ENCODE measurements at regions of chr1 and their contacts with region 1.

Region 1: DNA sequence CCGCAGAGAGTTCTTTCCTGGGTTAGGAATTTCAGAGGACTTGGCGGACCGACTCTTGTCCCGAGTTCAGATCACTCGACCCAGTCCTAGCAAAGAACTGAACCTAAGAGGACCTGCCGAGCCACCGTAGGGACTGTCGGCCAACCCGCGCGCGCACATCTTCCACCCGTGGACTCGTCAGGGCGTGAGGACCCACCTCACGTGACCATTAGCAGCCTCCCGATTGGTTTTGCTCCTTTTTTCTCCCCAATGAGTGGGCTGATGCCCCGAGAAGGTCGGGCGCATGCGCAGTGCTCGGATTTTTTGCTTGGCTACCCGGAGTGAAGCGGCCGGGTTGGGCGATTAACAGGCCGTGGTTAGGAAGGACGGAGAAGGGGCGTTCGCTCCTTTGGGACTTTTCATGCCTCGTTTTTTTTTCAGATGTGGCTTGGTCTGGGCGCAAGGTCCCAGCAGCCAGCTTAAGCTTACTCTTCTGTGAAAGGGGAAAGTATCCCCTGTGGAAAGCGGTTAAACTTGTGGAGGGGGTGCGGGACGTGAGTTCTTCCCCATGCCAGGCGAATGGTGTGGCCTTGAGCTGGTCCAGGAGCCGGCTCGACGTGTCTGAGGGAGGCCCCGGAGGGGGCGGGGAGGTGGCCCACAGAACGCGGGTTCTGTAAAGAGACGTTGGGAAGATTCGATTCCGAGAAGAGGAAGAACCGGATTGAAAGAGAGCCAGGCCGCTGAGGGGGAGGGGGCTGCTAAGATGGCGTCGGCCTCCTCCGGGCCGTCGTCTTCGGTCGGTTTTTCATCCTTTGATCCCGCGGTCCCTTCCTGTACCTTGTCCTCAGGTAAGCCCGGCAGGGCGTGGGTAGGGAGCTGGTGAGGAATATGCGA is at the start of gene PIP5K1A:
- DNase-seq: peak; percentile 99
- H3K4me3 Mint-ChIP-seq: peak within 1 kb of the TSS; percentile 99
- H3K27ac Mint-ChIP-seq: peak within 1 kb of the TSS; percentile 96
- H3K4me1 Mint-ChIP-seq: peaks cover 37% of the 10 kb centered on the region
- H3K27me3 Mint-ChIP-seq: no peaks in the 10 kb centered on the region
- total RNA-seq, gene PIP5K1A: 78.6 to 84.3 TPM

Region 2: GRCh38 chr1:151059078-151059907 is 139.2 kb before region 1 on chr1 and contains the start of gene CDC42SE1:
- CTCF ChIA-PET with region 1: no interaction called
- POLR2A ChIA-PET with region 1: no interaction called
- intact Hi-C with region 1: loop called (anchors 2 kb)
- DNase-seq: peak; percentile 89
- H3K4me3 Mint-ChIP-seq: peak within 1 kb of the TSS; percentile 98
- H3K27ac Mint-ChIP-seq: peak within 1 kb of the TSS; percentile 99
- H3K4me1 Mint-ChIP-seq: peaks cover 56% of the 10 kb centered on the region
- H3K27me3 Mint-ChIP-seq: no peaks in the 10 kb centered on the region
- total RNA-seq, gene CDC42SE1: 135 to 136 TPM

Region 3: GRCh38 chr1:151254217-151255213 is 56.0 kb after region 1 on chr1 and contains the start of gene PSMD4:
- CTCF ChIA-PET with region 1: interaction called, 32 read pairs
- POLR2A ChIA-PET with region 1: interaction called, 8 read pairs
- intact Hi-C with region 1: loop called (anchors 1 kb)
- DNase-seq: peak; percentile 97
- H3K4me3 Mint-ChIP-seq: peak within 1 kb of the TSS; percentile 92
- H3K27ac Mint-ChIP-seq: peak within 1 kb of the TSS; percentile 81
- H3K4me1 Mint-ChIP-seq: peaks cover 25% of the 10 kb centered on the region
- H3K27me3 Mint-ChIP-seq: peaks cover 2% of the 10 kb centered on the region
- total RNA-seq, gene PSMD4: 212 to 227 TPM

Region 4: GRCh38 chr1:151346769-151347522 is 148.5 kb after region 1 on chr1 and contains the start of gene RFX5:
- CTCF ChIA-PET with region 1: no interaction called
- POLR2A ChIA-PET with region 1: no interaction called
- intact Hi-C with region 1: loop called (anchors 5 kb)
- DNase-seq: peak; percentile 97
- H3K4me3 Mint-ChIP-seq: peak within 1 kb of the TSS; percentile 89
- H3K27ac Mint-ChIP-seq: peak within 1 kb of the TSS; percentile 92
- H3K4me1 Mint-ChIP-seq: peaks cover 32% of the 10 kb centered on the region
- H3K27me3 Mint-ChIP-seq: no peaks in the 10 kb centered on the region
- total RNA-seq, gene RFX5: 64.7 to 68.7 TPM

Region 5: GRCh38 chr1:151459331-151460046 is 261.0 kb after region 1 on chr1 and contains the start of gene POGZ:
- CTCF ChIA-PET with region 1: no interaction called
- POLR2A ChIA-PET with region 1: no interaction called
- intact Hi-C with region 1: loop called (anchors 5 kb)
- DNase-seq: peak; percentile 96
- H3K4me3 Mint-ChIP-seq: peak within 1 kb of the TSS; percentile 85
- H3K27ac Mint-ChIP-seq: peak within 1 kb of the TSS; percentile 91
- H3K4me1 Mint-ChIP-seq: peaks cover 20% of the 10 kb centered on the region
- H3K27me3 Mint-ChIP-seq: peaks cover 16% of the 10 kb centered on the region
- total RNA-seq, gene POGZ: 73.7 to 76.3 TPM